PC-3 (cell line): ENCODE measurements at regions of chr7 and their contacts with region 1.

Region 1: DNA sequence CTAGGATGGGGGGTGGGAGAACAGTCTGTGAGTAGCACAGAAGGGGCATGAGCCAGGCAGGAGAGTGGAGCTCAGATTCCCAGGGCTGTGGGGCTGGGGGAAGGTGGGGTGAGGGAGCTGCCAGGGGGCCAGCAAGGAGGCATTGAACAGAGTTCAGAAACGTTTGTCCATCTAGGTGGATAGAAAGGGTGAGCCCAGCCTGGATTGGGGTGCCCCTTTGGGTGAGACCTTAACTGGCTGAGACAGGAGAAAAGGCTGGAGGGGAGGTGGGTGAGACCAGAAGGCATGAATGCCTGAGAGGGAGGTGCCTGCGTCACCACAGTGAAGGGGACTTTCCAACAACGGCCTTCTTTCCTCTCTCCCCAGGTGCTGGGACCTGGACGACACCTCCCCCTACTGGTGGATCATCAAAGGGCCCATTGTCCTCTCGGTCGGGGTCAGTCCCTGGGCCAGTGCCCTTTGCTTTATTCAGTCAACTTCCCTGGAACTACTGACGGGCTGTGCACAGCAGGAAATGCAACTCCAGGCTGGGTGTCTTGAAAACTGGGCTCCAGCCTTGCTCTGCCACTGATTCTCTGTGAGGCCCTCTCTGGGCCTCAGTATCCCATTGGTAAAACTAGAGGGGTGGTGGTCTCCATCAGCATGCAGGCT is 11.0 kb downstream of the GHRHR start:
- DNase-seq: peak; percentile 69
- ATAC-seq: peak; percentile 67
- H3K4me3 ChIP-seq: no peak overlapping the region
- H3K27ac ChIP-seq: no peak overlapping the region
- H3K4me1 ChIP-seq: peaks cover 8% of the 10 kb centered on the region; the same call in 1 of the 2 replicates
- H3K27me3 ChIP-seq: peaks cover 14% of the 10 kb centered on the region; the same call in 1 of the 2 replicates
- CTCF ChIP-seq: peak; percentile 82

Region 2: DNA sequence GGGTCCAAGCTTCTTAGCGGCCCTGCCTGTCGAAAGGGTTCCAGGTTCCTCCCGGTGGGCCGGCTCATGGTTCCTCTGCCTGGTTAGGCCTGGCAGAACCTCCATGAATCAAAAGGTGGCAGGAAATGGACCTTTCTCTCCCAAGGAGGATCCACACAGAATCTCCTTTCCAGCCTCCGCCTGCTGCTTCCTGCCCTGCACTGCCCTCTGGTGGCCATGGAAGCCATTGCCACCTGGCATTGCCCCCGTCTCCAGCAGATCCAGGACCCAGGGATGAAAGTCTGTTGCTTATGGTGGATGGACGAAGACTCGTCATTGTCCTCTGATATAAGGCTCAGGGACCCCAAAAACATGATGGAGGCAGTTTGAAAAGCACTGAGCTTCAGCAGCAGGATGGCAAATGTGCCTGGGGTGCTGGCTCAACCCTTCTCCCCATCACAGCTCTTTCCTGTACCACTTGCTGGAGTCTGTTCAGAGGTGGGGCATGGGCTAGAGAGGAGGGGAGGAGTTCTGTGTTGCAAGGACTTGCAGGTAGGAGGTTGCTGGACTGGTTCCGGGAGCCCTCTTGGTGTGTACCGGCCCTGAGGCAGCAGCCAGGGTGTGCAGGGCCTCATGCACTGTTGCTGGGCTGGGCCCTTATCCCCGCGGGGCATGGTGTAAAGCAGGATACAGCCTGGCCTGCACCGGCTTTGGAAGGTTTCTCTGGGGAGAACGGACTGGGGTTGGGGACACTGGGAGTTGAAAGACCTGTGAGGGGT is 234.1 kb before region 1 on chr7:
- CTCF ChIA-PET with region 1: no interaction called
- POLR2A ChIA-PET with region 1: no interaction called
- intact Hi-C with region 1: loop called (anchors 5 kb)
- DNase-seq: peak; percentile 80
- ATAC-seq: peak; percentile 85
- H3K4me3 ChIP-seq: no peak overlapping the region
- H3K27ac ChIP-seq: no peak overlapping the region
- H3K4me1 ChIP-seq: no peaks in the 10 kb centered on the region
- H3K27me3 ChIP-seq: peaks cover 18% of the 10 kb centered on the region
- CTCF ChIP-seq: peak; percentile 94

Region 3: GRCh38 chr7:30800785-30801252 is 173.9 kb before region 1 on chr7:
- CTCF ChIA-PET with region 1: interaction called, 4 read pairs
- POLR2A ChIA-PET with region 1: no interaction called
- intact Hi-C with region 1: loop called (anchors 1 kb)
- DNase-seq: peak; percentile 80
- ATAC-seq: peak; percentile 34
- H3K4me3 ChIP-seq: no peak overlapping the region
- H3K27ac ChIP-seq: no peak overlapping the region
- H3K4me1 ChIP-seq: peaks cover 57% of the 10 kb centered on the region
- H3K27me3 ChIP-seq: no peaks in the 10 kb centered on the region
- CTCF ChIP-seq: peak; percentile 86

Region 4: DNA sequence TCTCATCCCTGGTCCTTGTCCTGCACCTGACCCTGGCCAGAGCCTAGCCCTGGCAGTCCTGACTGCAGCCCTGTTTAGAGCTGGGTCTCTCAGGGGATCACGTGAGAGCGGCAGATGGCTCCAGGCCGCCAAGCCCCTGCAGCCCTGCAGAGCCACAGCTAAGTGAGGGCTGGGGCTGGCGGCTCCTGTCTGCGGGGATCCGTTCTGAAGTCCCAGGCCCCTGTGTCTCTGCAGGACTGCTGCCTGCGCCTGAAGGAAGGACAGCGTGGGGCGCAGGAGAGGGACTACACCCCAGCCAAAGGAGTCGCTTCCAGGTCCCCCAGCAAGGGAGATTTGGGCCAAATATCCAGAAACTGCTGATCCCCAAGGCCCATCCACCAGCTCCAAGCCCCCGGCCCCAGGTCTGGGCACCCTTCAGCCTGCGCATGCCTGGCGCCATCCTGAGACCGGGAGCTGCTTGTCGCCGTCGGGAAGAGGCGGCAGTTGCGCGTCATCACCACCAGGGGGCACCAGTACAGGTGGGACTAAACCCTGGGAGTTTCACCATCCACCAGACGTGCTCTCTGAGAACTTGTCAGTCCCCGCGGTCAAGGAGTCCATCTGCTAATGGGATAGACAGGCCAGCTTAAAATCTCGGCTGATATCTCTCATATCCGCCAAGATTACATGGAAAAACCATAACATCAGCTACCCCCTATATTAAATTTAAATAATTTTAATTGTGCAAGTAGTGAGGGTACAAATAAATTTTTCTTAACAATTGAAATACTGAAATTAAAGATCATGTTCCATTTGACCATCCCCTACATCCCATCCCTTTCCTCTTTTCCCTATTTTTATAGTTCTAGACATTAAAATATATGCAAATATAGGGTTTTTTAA is 36.1 kb before region 1 on chr7:
- CTCF ChIA-PET with region 1: no interaction called
- POLR2A ChIA-PET with region 1: no interaction called
- intact Hi-C with region 1: loop called (anchors 2 kb)
- DNase-seq: peak; percentile 85
- ATAC-seq: peak; percentile 95
- H3K4me3 ChIP-seq: no peak overlapping the region
- H3K27ac ChIP-seq: no peak overlapping the region
- H3K4me1 ChIP-seq: 0 out of 2 replicates have a peak, but pooled peaks cover 5% of the 10 kb centered on the region
- H3K27me3 ChIP-seq: peaks cover 38% of the 10 kb centered on the region
- CTCF ChIP-seq: peak; percentile 85

Region 5: DNA sequence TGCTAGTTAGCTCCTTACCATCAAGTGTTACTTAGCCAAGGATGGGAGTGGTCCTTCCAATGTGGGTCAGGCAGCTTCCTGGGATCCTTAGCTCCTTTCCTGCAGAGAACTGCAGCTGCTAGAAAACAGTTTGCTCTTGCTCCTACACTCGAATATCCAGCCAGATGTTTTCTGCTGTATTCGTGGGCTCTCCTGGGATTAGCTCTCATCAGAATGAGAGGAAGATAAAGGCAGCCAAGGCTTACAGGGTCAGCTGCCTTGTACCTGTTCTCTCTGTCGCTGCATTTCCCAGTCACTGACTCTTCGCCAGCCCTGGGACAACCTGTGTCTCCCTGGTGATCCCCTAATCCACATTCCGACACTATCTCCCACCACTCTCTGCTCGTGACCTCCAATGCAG is 336.8 kb after region 1 on chr7:
- CTCF ChIA-PET with region 1: no interaction called
- POLR2A ChIA-PET with region 1: no interaction called
- intact Hi-C with region 1: no loop called
- DNase-seq: no peak
- ATAC-seq: no peak
- H3K4me3 ChIP-seq: no peak overlapping the region
- H3K27ac ChIP-seq: no peak overlapping the region
- H3K4me1 ChIP-seq: no peaks in the 10 kb centered on the region
- H3K27me3 ChIP-seq: peaks cover 86% of the 10 kb centered on the region
- CTCF ChIP-seq: no peak

Region 6: DNA sequence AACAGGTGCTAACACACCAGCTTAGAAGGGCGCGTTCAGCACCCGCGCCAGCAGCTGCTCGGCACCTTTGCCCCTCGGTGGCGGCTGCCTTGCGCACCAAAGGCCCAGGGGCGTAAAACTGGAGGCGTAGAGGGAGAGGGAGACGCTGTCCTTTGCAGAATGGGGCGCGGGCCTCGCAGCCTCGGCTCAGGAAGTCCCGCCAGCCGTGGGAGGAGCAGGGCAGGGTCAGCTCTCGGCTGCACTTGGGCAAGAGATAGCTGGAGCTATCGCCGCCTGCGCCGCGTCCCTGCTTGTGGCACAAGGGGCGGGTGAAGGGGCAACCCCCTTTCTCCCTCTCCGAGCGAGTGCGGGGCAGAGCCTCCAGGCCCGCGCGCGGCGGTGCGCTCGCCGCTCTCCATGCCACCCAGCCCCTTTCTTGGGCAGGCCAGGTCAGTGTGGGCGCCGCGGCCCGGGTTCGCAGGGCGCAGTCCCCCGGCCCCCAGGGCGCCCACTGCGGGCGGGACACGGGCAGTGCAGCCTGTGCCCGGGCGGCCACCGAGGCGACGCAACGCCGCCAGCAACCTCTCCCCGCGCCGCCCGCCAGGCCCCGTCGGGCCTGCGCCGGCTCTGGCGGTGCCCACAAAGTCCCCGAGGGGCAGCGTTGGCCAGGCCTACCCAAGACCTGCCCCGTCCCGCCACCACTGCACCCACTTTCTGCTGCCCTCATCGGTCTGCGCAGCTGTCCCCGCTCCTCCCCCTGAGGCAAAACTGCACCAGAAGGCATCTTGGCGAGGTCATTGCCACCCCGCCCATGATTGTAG is 361.7 kb after region 1 on chr7:
- CTCF ChIA-PET with region 1: no interaction called
- POLR2A ChIA-PET with region 1: no interaction called
- intact Hi-C with region 1: no loop called
- DNase-seq: no peak
- ATAC-seq: no peak
- H3K4me3 ChIP-seq: no peak overlapping the region
- H3K27ac ChIP-seq: no peak overlapping the region
- H3K4me1 ChIP-seq: no peaks in the 10 kb centered on the region
- H3K27me3 ChIP-seq: peaks cover 79% of the 10 kb centered on the region
- CTCF ChIP-seq: no peak